Spleen (tissue), 13 donors: ENCODE measurements at regions of chr7 and their contacts with region 1.

Region 1: DNA sequence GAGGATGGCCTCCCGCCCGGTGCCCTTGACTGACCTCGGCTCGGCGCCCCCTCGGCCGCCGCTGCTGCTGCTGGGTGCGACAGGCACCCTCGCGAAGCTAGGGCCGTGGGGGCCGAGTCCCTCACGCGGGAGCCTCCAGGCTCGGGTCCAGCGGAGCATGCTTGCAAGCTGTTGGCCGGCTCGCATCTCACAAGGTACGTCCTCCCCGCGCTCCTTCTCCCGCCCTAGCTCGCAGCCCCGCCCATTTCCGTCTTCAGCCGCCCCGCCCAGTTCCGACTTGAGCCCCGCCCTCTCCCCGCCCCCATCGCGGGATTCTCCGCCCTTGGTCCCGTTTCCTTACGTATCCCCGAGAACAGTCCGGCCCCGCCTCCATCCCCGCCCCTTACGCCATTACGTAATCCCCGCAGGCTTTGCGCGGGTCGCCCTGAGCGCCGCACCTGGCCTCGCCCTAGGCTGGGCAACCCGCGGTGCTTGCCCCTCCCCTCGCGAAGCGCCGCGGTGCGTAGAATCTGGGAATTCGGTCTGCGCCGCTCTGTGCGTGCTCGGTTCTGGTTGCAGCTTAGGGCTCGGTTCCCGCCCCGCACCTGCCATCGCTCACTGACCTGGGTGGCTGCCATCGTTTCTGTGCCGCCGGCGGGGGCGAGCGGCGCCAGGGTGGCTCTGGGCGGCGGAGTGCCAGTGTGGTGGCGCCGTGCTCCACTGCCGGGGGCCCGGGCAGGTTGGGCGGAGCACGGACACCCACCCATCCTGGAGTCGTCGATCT is at the start of gene ABHD11:
- DNase-seq: peak; percentile 99
- H3K4me3 ChIP-seq: peak within 1 kb of the TSS; percentile 82 to 98 (median 94)
- H3K27ac ChIP-seq: peak within 1 kb of the TSS; percentile 72 to 95 (median 90)
- H3K4me1 ChIP-seq: peaks cover 6 to 59% (median 39%) of the 10 kb centered on the region in 6 donors
- H3K27me3 ChIP-seq: peaks cover 0 to 3% (median 0%) of the 10 kb centered on the region in 7 donors
- CTCF ChIP-seq: peak in 1 of 11 experiments; percentile 27
- POLR2A ChIP-seq: peak in 2 of 3 donors; percentile 51 to 75
- total RNA-seq, gene ABHD11: 11.4 to 26.0 (median 20.6) TPM

Region 2: GRCh38 chr7:72622532-72622931 is 1116.3 kb before region 1 on chr7:
- intact Hi-C with region 1: no loop called
- DNase-seq: no peak
- H3K4me3 ChIP-seq: no peak overlapping the region
- H3K27ac ChIP-seq: no peak overlapping the region
- H3K4me1 ChIP-seq: no peaks in the 10 kb centered on the region
- H3K27me3 ChIP-seq: no peaks in the 10 kb centered on the region
- CTCF ChIP-seq: no peak
- POLR2A ChIP-seq: no peak

Region 3: DNA sequence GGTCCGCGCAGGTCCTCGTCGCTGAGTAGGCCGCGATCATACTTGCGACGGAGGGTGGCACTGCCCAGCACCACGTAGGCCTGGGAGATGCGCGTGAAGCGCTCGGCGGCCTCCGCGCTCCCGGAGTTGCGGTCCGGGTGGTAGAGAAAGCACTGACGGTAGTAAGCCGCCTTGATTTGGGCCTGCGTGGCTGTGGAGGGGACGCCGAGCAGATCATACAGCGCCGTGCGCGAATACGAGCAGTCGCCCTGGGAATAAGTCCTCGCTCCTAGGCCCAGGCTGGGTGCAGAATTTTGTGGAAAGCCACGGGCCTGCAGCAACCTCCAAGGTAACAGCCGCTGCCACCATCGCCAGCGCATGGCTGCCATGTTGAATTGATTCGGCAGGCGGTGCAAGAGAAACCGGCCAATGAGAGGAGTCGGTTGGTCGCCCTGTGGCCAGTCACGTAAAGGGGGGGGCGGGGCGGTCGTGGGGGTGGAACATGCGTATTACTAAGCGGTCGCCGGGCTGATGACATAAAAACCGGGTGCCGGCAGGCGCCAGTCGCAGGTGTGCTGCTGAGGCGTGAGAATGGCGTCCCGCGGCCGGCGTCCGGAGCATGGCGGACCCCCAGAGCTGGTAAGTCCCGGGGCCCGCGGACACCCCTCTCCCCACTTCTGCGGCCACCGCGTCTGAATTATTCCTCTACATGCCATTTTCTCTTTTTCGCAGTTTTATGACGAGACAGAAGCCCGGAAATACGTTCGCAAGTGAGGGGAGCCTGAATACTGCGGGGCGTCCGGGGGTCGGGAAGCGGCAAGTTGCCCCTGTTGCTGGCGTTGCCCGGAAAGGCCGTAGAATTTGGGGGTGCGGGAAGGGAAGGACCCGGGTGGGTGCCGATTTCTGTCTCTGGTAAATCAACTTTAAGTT is 55.5 kb before region 1 on chr7 and contains the starts of genes BUD23 and DNAJC30:
- intact Hi-C with region 1: loop called (anchors 10 kb)
- DNase-seq: peak; percentile 99
- H3K4me3 ChIP-seq: peak within 1 kb of the TSS; percentile 86 to 100 (median 96)
- H3K27ac ChIP-seq: peak within 1 kb of the TSS; percentile 65 to 89 (median 84)
- H3K4me1 ChIP-seq: peaks cover 20 to 69% (median 42%) of the 10 kb centered on the region in 6 donors
- H3K27me3 ChIP-seq: no peaks in the 10 kb centered on the region
- CTCF ChIP-seq: peak in 5 of 11 experiments; percentile 25 to 53 (median 37)
- POLR2A ChIP-seq: peak in 2 of 3 donors; percentile 17 to 56
- total RNA-seq, gene BUD23: 44.2 to 54.8 (median 54.0) TPM
- total RNA-seq, gene DNAJC30: 5.6 to 12.7 (median 8.6) TPM

Region 4: GRCh38 chr7:73696372-73696771 is 42.4 kb before region 1 on chr7:
- intact Hi-C with region 1: no loop called
- DNase-seq: no peak
- H3K4me3 ChIP-seq: no peak overlapping the region
- H3K27ac ChIP-seq: no peak overlapping the region
- H3K4me1 ChIP-seq: no peaks in the 10 kb centered on the region
- H3K27me3 ChIP-seq: no peaks in the 10 kb centered on the region
- CTCF ChIP-seq: no peak
- POLR2A ChIP-seq: no peak

Region 5: GRCh38 chr7:73851410-73852234 is 112.8 kb after region 1 on chr7:
- intact Hi-C with region 1: loop called (anchors 5 kb)
- DNase-seq: no peak
- H3K4me3 ChIP-seq: no peak overlapping the region
- H3K27ac ChIP-seq: no peak overlapping the region
- H3K4me1 ChIP-seq: peaks cover 7 to 19% (median 9%) of the 10 kb centered on the region in 6 donors
- H3K27me3 ChIP-seq: peaks cover 0 to 34% (median 0%) of the 10 kb centered on the region in 7 donors
- CTCF ChIP-seq: no peak
- POLR2A ChIP-seq: no peak

Region 6: GRCh38 chr7:74051629-74052410 is 313.0 kb after region 1 on chr7:
- intact Hi-C with region 1: no loop called
- DNase-seq: peak; percentile 63
- H3K4me3 ChIP-seq: no peak overlapping the region
- H3K27ac ChIP-seq: no peak overlapping the region
- H3K4me1 ChIP-seq: peaks cover 0 to 6% (median 0%) of the 10 kb centered on the region in 6 donors
- H3K27me3 ChIP-seq: peaks cover 0 to 3% (median 0%) of the 10 kb centered on the region in 7 donors
- CTCF ChIP-seq: no peak
- POLR2A ChIP-seq: no peak